PC-9 (cell line): ENCODE measurements at regions of chr3 and their contacts with region 1.

Region 1: GRCh38 chr3:115147329-115148141 is 447 bp upstream of the ZBTB20 start:
- DNase-seq: peak; percentile 97 to 98
- H3K4me3 ChIP-seq: peak overlapping the region; percentile 76
- H3K27ac ChIP-seq: peak overlapping the region; percentile 47
- H3K4me1 ChIP-seq: peaks cover 17% of the 10 kb centered on the region
- H3K27me3 ChIP-seq: no peaks in the 10 kb centered on the region
- CTCF ChIP-seq: no peak

Region 2: GRCh38 chr3:115169808-115170207 is 22.3 kb after region 1 on chr3:
- CTCF ChIA-PET with region 1: no interaction called
- POLR2A ChIA-PET with region 1: no interaction called
- intact Hi-C with region 1: no loop called
- DNase-seq: no peak
- H3K4me3 ChIP-seq: no peak overlapping the region
- H3K27ac ChIP-seq: no peak overlapping the region
- H3K4me1 ChIP-seq: no peaks in the 10 kb centered on the region
- H3K27me3 ChIP-seq: no peaks in the 10 kb centered on the region
- CTCF ChIP-seq: peak; percentile 57

Region 3: DNA sequence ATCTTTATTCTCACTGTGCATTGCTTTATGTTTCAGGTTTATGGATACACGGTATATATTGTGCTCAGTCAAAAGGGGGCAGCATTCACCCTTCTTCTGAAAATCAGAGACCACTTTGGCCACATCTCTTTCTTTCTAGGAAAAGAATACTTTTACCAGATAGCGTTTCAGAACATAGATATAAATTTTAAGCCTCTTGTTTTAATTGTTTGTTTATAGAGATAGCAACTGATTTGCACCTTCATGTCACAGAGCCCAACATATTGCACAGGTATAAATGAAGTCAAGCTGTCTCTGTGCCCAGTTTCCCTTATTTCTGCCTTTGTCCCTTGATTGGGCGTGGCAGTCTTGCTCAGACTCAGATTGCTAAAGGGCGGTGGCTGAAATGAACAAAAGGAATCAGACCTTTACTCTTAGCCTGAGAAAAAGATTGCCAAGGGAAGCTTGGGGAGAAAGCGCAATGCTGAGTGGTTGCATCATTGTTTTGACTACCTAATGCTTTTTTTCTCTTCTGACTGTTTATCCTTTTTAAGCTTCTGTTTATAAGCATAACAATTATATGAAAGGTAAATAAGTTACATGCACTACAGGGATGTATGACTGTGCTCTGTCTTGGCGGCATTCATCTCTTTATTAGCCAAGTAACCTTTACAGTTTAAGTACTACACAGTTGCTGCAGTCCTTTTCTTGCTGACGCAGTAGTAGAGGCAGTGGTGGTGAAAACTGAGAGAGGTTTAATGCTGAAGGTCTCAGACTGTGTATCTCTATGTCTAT is 70.3 kb after region 1 on chr3:
- CTCF ChIA-PET with region 1: interaction called, 11 read pairs
- POLR2A ChIA-PET with region 1: no interaction called
- intact Hi-C with region 1: no loop called
- DNase-seq: peak; percentile 40 to 51
- H3K4me3 ChIP-seq: no peak overlapping the region
- H3K27ac ChIP-seq: no peak overlapping the region
- H3K4me1 ChIP-seq: peaks cover 7% of the 10 kb centered on the region
- H3K27me3 ChIP-seq: no peaks in the 10 kb centered on the region
- CTCF ChIP-seq: peak; percentile 84

Region 4: DNA sequence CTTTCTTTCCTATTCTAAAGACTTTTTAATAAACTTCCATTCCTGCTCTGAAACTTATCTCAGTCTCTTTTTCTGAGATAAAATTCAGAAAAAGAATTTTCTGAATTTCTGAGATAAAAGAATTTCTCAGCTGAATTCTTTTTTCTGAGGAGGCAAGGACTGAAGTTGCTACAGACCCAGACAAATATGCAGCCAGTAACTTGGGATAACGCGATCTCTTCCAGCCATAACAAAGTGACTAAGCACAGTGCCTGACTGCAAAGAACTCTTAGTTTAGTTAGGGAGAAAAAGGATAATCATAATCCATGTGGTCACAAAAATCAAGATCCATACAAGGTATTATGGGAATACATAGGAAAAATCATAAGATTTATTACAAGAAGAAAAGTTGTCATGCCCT is 253.8 kb after region 1 on chr3:
- CTCF ChIA-PET with region 1: no interaction called
- POLR2A ChIA-PET with region 1: interaction called, 22 read pairs
- intact Hi-C with region 1: no loop called
- DNase-seq: no peak
- H3K4me3 ChIP-seq: no peak overlapping the region
- H3K27ac ChIP-seq: no peak overlapping the region
- H3K4me1 ChIP-seq: no peaks in the 10 kb centered on the region
- H3K27me3 ChIP-seq: no peaks in the 10 kb centered on the region
- CTCF ChIP-seq: no peak

Region 5: DNA sequence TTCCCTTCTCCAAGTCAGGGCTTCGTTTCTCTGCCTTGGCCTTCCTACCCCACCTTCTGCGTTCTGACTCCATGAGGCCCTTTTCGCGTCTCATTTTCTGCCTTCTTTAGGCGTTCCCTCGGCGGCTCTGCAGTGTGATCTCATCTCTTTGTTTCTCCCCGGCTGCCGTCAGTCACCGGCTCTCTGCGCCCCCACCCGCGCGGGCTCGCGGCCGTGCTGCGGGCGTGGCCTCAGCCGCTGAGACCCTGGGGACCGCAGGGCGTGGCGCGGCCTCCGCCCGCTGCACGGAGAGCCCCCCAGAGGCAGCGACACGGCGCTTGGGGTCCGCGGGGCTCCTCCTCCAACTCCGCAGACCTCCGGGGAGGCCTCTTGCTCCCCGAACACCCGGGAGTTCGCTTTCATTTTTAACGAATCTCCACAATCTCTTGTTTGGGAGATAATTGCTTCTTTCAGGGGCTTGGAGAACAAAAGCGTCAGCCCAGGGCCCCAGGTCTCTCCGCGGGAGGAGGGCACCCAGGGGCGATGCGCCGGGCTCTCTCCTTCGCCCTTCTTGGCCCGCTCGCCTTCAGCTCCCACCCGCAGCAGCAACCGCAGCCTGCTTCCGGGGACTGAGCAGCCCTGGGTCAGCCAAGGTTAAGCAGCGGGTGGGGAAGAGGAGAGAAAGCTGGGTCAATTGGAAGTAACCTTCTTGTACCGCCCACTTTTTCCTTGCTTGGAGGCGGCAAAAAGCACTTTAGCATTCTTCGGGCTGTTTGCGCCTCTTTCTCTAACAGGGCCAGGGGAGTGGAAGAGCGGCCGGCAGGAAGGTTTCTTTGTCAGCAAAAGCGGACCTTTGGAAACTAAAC is 511.0 kb after region 1 on chr3:
- CTCF ChIA-PET with region 1: no interaction called
- POLR2A ChIA-PET with region 1: no interaction called
- intact Hi-C with region 1: loop called (anchors 2 kb)
- DNase-seq: peak in 1 of 2 experiments; percentile 73
- H3K4me3 ChIP-seq: peak overlapping the region; percentile 66
- H3K27ac ChIP-seq: no peak overlapping the region
- H3K4me1 ChIP-seq: peaks cover 6% of the 10 kb centered on the region; the same call in 1 of the 2 replicates
- H3K27me3 ChIP-seq: no peaks in the 10 kb centered on the region
- CTCF ChIP-seq: no peak

Region 6: GRCh38 chr3:115790759-115791158 is 643.2 kb after region 1 on chr3:
- CTCF ChIA-PET with region 1: no interaction called
- POLR2A ChIA-PET with region 1: no interaction called
- intact Hi-C with region 1: loop called (anchors 1 kb)
- DNase-seq: peak; percentile 79 to 91
- H3K4me3 ChIP-seq: peak overlapping the region; percentile 5; the same call in 1 of the 2 replicates
- H3K27ac ChIP-seq: peak overlapping the region; percentile 89
- H3K4me1 ChIP-seq: peaks cover 54% of the 10 kb centered on the region
- H3K27me3 ChIP-seq: no peaks in the 10 kb centered on the region
- CTCF ChIP-seq: no peak